Mammary epithelial cell (primary cell): ENCODE measurements at regions of chr2 and their contacts with region 1.

Region 1: DNA sequence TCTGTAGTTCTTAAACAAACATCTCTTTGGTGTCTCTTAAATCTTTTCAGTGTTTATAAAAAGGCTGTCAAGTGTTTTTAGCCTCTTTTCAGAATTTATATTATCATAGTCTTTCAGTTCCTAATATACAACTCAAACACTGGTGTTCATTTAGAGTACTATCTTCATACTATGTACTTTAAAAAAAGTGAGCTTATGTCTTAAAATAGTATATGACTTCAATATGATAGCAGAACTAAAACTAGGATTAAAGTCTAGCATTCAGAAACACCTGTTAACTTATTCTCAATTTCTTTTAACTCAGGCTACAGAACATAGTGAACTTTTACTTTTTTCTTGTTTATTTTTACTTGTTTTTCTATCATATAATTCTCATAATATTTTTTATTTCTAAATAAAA is 14.7 kb upstream of the IKZF2 start:
- DNase-seq: no peak
- H3K4me3 ChIP-seq: no peak overlapping the region
- H3K27ac ChIP-seq: no peak overlapping the region
- H3K4me1 ChIP-seq: peaks cover 12% of the 10 kb centered on the region
- H3K27me3 ChIP-seq: no peaks in the 10 kb centered on the region
- CTCF ChIP-seq: no peak

Region 2: GRCh38 chr2:211269422-211269821 is 1896.7 kb before region 1 on chr2:
- CTCF ChIA-PET with region 1: no interaction called
- dilution Hi-C with region 1: no loop called
- in situ Hi-C with region 1: no loop called
- intact Hi-C with region 1: no loop called
- DNase-seq: peak; percentile 4
- H3K4me3 ChIP-seq: no peak overlapping the region
- H3K27ac ChIP-seq: no peak overlapping the region
- H3K4me1 ChIP-seq: no peaks in the 10 kb centered on the region
- H3K27me3 ChIP-seq: no peaks in the 10 kb centered on the region
- CTCF ChIP-seq: no peak

Region 3: GRCh38 chr2:213065583-213066442 is 100.3 kb before region 1 on chr2:
- CTCF ChIA-PET with region 1: interaction called, 15 read pairs
- dilution Hi-C with region 1: no loop called
- in situ Hi-C with region 1: no loop called
- intact Hi-C with region 1: no loop called
- DNase-seq: peak; percentile 37
- H3K4me3 ChIP-seq: peak overlapping the region; percentile 4 to 20 (median 10)
- H3K27ac ChIP-seq: no peak overlapping the region
- H3K4me1 ChIP-seq: peaks cover 7% of the 10 kb centered on the region
- H3K27me3 ChIP-seq: no peaks in the 10 kb centered on the region
- CTCF ChIP-seq: no peak